Gastrocnemius medialis (tissue), 4 donors: ENCODE measurements at regions of chr17 and their contacts with region 1.

Region 1: DNA sequence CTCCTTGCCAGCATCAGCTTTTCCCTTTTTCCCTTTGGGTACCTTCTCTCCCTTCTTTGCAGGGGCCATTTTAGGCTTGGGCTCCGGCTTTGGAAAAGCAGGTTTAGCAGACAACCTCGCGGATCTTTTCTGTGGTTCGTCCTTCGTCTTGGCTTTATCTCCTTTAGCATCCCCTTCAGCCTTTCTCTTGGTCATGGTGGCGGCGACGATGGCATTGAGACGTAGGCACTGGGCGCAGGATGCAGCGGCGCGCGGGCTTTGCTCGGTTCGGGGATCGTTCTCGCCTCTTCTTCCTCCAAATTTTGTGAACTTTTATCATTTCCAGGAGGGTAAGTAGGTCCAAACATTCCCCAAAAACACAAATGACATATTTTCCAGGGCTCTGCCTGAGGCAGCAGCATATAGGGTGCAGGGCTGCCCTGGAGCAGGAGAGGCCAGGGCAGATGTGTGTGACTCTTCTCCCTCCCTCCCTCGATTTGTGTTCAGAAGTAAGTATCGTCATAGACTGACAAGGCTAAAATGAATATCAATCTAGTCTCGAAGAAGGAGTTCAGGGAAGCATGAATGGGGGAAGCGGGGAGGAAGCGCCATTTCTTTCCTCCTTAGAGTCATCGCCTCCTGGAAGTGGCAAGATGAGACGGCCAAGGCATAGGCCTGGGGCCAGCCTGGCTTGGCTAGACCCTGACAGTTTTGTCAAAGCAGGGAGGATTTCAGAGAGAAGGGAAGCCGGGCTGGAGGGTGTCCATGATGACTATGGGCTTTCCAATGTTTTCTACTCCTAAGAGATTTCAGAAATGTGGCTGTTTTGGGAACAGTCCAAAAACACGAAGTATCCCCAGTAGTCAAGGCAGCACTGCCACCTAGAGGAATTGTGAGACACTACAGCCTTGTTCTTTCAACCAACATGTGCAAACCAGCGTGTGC is 13.2 kb downstream of the CHCT1 start:
- DNase-seq: peak; percentile 60 to 63
- ATAC-seq: peak; percentile 84 to 91
- H3K4me3 ChIP-seq: peak overlapping the region in 2 of 4 donors; percentile 14 to 46
- H3K27ac ChIP-seq: peak overlapping the region in 1 of 4 donors; percentile 53
- H3K4me1 ChIP-seq: peaks cover 4 to 5% of the 10 kb centered on the region in 2 donors
- H3K27me3 ChIP-seq: no peaks in the 10 kb centered on the region
- CTCF ChIP-seq: peak; percentile 89 to 94 (median 92)
- POLR2A ChIP-seq: no peak

Region 2: DNA sequence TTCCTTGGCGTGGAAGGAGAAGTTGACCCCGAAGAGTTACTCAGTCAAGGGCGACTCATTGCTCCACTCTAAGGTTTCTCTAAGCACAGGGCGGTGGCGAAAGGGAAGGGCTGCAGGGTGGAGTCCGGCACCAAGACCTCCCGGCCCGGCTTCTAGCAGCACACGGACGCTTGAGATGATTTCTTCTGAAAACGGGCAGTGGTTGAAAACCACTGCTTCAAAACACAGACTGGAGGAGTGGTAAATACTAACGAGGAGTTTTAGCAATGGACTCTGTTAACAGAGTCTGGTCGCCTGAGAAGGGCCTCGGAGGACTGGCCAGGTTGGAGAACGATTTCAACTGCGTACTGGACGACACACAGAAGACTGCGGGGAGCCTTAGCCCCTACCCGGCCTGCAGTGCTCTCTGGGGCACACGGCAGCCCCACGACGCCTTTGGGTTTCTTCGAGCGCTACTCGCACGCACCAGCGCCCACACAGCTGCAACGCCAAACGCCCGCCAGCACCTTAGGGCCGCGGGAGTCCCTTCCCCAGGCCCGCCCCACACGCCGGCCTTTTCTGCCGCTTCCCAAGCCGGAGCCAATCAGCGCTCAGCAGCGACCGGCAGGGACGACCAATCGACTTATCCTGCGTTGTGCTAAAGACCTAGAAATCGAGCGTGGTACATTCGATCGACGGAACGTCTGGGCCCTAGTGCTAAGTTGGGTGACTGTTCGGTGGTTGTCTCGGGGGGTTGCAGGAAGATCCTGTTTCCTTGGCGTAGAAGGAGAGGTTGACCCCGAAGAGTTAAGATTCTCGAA is 300.2 kb before region 1 on chr17:
- in situ Hi-C with region 1: loop called in 3 of 4 experiments (anchors 25 kb)
- intact Hi-C with region 1: no loop called
- DNase-seq: peak; percentile 79 to 84
- ATAC-seq: peak; percentile 95
- H3K4me3 ChIP-seq: peak overlapping the region; percentile 80 to 91 (median 85)
- H3K27ac ChIP-seq: peak overlapping the region; percentile 56 to 80 (median 78)
- H3K4me1 ChIP-seq: peaks cover 15 to 23% of the 10 kb centered on the region in 2 donors
- H3K27me3 ChIP-seq: peaks cover 17 to 23% (median 20%) of the 10 kb centered on the region in 3 donors
- CTCF ChIP-seq: no peak
- POLR2A ChIP-seq: peak; percentile 36

Region 3: DNA sequence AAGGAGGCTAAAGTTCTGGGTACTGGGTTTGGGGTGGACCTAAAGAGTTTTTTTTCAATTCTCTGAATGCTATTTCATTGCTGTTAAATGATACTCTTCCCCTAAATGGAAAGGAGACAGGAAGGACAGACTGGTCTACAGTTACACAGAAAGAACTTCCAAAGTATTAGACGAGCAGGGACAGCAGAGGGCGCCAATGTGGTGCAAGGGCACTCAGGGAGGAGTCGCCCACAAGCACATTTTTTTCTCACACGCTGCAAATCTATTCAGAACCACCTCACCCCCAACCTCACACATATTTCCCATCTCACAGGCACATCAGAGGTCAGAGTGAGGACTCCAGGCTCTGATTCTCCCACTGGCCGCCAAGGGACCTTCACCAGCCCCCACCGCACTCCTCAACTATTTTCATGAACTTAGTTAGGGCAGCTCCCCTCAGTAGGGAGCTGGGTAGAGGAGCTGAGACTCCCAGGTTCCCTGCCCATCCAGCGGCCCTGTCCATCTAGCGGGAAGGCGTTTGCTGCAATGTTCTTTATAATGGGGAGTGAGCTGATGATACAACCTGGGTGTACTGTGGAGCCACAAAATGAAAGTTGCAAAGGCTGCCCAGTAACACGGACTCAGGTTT is 292.5 kb before region 1 on chr17:
- in situ Hi-C with region 1: loop called in 3 of 4 experiments (anchors 25 kb)
- intact Hi-C with region 1: loop called (anchors 1 kb)
- DNase-seq: peak; percentile 43 to 61
- ATAC-seq: peak; percentile 70 to 83
- H3K4me3 ChIP-seq: peak overlapping the region in 2 of 4 donors; percentile 23 to 53
- H3K27ac ChIP-seq: no peak overlapping the region
- H3K4me1 ChIP-seq: peaks cover 13 to 24% of the 10 kb centered on the region in 2 donors
- H3K27me3 ChIP-seq: peaks cover 38 to 58% (median 58%) of the 10 kb centered on the region in 3 donors
- CTCF ChIP-seq: peak; percentile 9 to 74 (median 50)
- POLR2A ChIP-seq: no peak

Region 4: GRCh38 chr17:60421273-60421934 is 14.1 kb before region 1 on chr17:
- in situ Hi-C with region 1: no loop called
- intact Hi-C with region 1: loop called (anchors 2 kb)
- DNase-seq: peak; percentile 37 to 64
- ATAC-seq: peak; percentile 89 to 95
- H3K4me3 ChIP-seq: peak overlapping the region; percentile 53 to 68 (median 59)
- H3K27ac ChIP-seq: peak overlapping the region in 3 of 4 donors; percentile 7 to 44 (median 39)
- H3K4me1 ChIP-seq: peaks cover 4 to 8% of the 10 kb centered on the region in 2 donors
- H3K27me3 ChIP-seq: no peaks in the 10 kb centered on the region
- CTCF ChIP-seq: peak; percentile 87 to 96 (median 94)
- POLR2A ChIP-seq: no peak

Region 5: GRCh38 chr17:60506312-60506711 is 70.8 kb after region 1 on chr17:
- in situ Hi-C with region 1: no loop called
- intact Hi-C with region 1: no loop called
- DNase-seq: no peak
- ATAC-seq: peak; percentile 47 to 80
- H3K4me3 ChIP-seq: no peak overlapping the region
- H3K27ac ChIP-seq: peak overlapping the region in 3 of 4 donors; percentile 5 to 53 (median 25)
- H3K4me1 ChIP-seq: peaks cover 36 to 53% of the 10 kb centered on the region in 2 donors
- H3K27me3 ChIP-seq: no peaks in the 10 kb centered on the region
- CTCF ChIP-seq: no peak
- POLR2A ChIP-seq: no peak